ENCODE measurements at regions of chr3 and their contacts with region 1.

Region 1: GRCh38 chr3:117526470-117527079 is 817.0 kb downstream of the TUSC7 start:
- DNase-seq: peak; percentile 49
- H3K4me3 Mint-ChIP-seq: no peak overlapping the region
- H3K27ac Mint-ChIP-seq: no peak overlapping the region
- H3K4me1 Mint-ChIP-seq: no peaks in the 10 kb centered on the region
- H3K27me3 Mint-ChIP-seq: no peaks in the 10 kb centered on the region
- CTCF ChIP-seq: no peak

Region 2: GRCh38 chr3:117036259-117036799 is 490.2 kb before region 1 on chr3:
- CTCF ChIA-PET with region 1: no interaction called
- intact Hi-C with region 1: loop called (anchors 5 kb)
- DNase-seq: no peak
- H3K4me3 Mint-ChIP-seq: no peak overlapping the region
- H3K27ac Mint-ChIP-seq: no peak overlapping the region
- H3K4me1 Mint-ChIP-seq: peaks cover 21% of the 10 kb centered on the region
- H3K27me3 Mint-ChIP-seq: no peaks in the 10 kb centered on the region
- CTCF ChIP-seq: no peak

Region 3: GRCh38 chr3:117671722-117672318 is 145.2 kb after region 1 on chr3:
- CTCF ChIA-PET with region 1: no interaction called
- intact Hi-C with region 1: no loop called
- DNase-seq: no peak
- H3K4me3 Mint-ChIP-seq: no peak overlapping the region
- H3K27ac Mint-ChIP-seq: no peak overlapping the region
- H3K4me1 Mint-ChIP-seq: no peaks in the 10 kb centered on the region
- H3K27me3 Mint-ChIP-seq: peaks cover 23% of the 10 kb centered on the region
- CTCF ChIP-seq: no peak